ENCODE measurements at regions of chr14 and their contacts with region 1.

Region 1: GRCh38 chr14:77457522-77458290 is at the starts of genes AHSA1 and VIPAS39:
- DNase-seq: peak; percentile 95
- ATAC-seq: peak; percentile 99
- total RNA-seq, gene AHSA1: 194 TPM
- total RNA-seq, gene VIPAS39: 11.0 TPM

Region 2: DNA sequence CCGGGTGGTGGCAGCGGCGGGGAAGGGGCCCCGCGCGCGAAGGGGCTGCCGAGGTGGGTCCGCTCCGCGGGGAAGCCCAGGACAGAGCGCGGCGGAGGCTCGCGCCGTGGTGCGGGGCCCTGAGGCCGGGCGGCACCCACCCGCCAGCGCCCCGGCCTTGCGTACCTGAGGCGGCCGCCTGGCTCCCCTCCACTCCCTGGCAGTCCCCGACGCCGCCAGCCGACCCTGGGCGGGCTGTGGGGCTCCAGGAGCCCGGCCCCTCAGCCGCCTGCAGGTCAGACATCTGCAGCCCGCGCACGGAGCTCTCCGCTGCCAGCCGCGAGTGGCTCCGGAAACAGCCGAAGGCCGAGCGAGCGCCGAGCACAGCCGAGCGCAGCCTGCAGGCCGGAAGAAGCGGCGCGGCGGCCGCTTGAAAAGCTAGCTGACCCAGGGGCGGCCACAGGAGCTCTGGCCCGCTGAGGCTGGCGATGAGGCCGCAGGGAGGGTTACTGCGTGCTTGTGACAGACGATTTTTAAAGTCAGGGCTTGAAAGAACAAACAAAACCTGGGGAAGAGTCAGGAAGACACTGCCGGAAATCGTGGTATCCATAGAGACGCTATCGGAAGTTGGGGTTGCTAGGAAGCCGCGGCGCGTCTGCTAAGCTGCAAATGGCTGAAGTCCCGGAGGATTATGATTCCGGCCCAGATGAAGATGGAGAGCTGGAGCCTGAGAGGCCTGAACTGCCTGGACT is 80.8 kb before region 1 on chr14 and contains the starts of genes SAMD15 and TMED8:
- intact Hi-C with region 1: loop called (anchors 2 kb)
- DNase-seq: peak; percentile 93
- ATAC-seq: peak; percentile 98
- total RNA-seq, gene SAMD15: 0.08 TPM
- total RNA-seq, gene TMED8: 5.1 TPM

Region 3: GRCh38 chr14:77554207-77554606 is 96.5 kb after region 1 on chr14:
- intact Hi-C with region 1: loop called (anchors 5 kb)
- DNase-seq: no peak
- ATAC-seq: no peak

Region 4: DNA sequence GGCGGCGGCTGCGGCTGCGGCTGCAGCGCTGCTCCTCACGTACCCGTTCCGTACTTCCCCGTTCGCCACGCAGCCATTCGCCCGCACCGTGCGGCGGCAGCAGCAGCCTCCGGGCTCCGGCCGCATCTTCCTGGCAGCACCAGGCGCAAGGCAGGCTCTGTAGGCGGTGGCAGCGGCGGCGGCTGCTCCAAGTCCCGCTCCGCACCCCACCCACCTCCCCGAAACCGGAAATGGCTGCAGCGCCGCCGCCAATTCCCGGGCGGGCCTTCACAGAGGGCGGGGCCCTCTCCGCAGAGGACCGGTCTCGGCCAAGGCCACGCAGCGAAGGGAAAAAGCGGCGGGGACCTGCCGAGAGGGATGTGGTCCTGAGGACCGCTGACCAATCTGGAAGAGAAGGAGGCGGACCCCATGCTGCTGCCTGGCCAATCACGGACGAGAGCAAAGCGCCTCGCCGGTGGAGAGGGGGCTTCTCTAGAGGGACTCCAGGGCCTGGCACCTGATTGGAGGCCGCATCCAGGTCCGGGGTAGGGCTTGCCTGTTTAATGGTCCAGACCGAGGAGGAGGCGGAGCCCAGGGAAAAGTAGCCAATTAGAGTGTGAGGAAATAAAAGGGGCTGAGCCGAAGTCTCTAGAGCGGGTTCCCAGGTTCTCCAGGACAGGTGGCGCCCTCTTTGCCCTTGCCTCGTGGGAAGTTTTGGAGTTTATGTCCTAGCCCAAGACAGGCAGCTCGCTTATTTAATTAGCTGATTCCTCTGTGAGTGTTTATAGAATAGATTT is 158.9 kb after region 1 on chr14 and contains the start of gene SPTLC2:
- intact Hi-C with region 1: loop called (anchors 2 kb)
- DNase-seq: peak; percentile 98
- ATAC-seq: peak; percentile 98
- total RNA-seq, gene SPTLC2: 10.8 TPM